HepG2 (cell line): ENCODE measurements at regions of chr2 and their contacts with region 1.

Region 1: DNA sequence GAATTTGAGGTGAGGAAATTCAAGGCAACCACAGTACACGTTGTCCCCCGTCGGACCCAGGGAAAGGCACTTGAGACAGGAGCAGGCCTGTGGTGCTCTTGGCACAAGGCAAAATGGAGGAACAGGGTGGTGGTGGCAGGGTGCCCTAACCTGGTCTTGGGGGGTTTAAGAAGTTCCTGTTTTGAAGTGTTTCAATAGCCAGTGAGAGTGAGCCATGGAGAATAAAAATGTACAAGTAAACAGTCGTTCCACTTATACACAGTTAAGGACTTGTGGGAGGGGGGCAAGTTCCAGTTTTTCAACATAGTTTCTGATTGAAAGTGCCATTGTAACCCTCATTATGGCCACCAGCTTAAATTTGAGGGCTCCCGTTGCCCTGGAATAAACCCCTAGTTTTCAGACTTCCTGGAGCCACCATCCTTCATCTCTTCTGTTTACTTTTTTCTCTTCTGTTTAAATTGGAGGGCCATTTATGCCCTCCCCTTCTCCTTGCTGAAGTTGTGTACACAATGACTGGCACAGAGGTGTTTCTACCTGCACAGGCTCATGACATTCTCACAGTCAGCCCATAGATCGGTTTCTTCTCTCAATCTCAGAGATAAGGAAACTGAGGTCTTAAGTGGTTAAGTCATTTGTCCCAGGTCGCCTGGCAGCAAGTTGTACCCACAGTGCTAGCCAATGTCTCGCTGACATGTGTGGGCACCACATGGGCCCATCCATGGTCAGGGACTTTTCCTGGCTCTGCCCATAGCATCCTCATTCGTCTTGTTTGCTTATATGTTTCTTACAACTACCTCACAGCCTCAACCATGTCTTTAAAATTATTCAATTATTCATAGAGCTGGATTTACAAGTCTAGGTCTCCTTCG is 66.0 kb upstream of the ST3GAL5 start:
- DNase-seq: peak; percentile 71
- ATAC-seq: no peak
- H3K4me3 ChIP-seq: no peak overlapping the region
- H3K27ac ChIP-seq: no peak overlapping the region
- H3K4me1 ChIP-seq: peaks cover 47% of the 10 kb centered on the region
- H3K27me3 ChIP-seq: no peaks in the 10 kb centered on the region; a peak in 1 of 5 replicates
- CTCF ChIP-seq: no peak
- EP300 ChIP-seq: peak in 1 of 2 experiments; percentile 69; a peak in 2 of 4 replicates
- POLR2A ChIP-seq: no peak
- RAD21 ChIP-seq: no peak

Region 2: GRCh38 chr2:84201158-84201557 is 1753.7 kb before region 1 on chr2:
- CTCF ChIA-PET with region 1: no interaction called
- POLR2A ChIA-PET with region 1: no interaction called
- in situ Hi-C with region 1: no loop called
- intact Hi-C with region 1: no loop called
- DNase-seq: no peak
- ATAC-seq: no peak
- H3K4me3 ChIP-seq: no peak overlapping the region
- H3K27ac ChIP-seq: no peak overlapping the region
- H3K4me1 ChIP-seq: no peaks in the 10 kb centered on the region
- H3K27me3 ChIP-seq: peaks cover 0 to 5% of the 10 kb centered on the region in 2 experiments; a peak in 2 of 5 replicates
- CTCF ChIP-seq: no peak
- EP300 ChIP-seq: no peak
- POLR2A ChIP-seq: no peak
- RAD21 ChIP-seq: no peak

Region 3: GRCh38 chr2:86413296-86414094 is 458.7 kb after region 1 on chr2:
- CTCF ChIA-PET with region 1: no interaction called
- POLR2A ChIA-PET with region 1: no interaction called
- in situ Hi-C with region 1: no loop called
- intact Hi-C with region 1: loop called (anchors 5 kb)
- DNase-seq: no peak
- ATAC-seq: no peak
- H3K4me3 ChIP-seq: no peak overlapping the region
- H3K27ac ChIP-seq: no peak overlapping the region
- H3K4me1 ChIP-seq: no peaks in the 10 kb centered on the region
- H3K27me3 ChIP-seq: peaks cover 0 to 14% of the 10 kb centered on the region in 2 experiments; a peak in 2 of 5 replicates
- CTCF ChIP-seq: no peak
- EP300 ChIP-seq: no peak
- POLR2A ChIP-seq: no peak
- RAD21 ChIP-seq: no peak